ENCODE measurements at regions of chr3 and their contacts with region 1.

Region 1: GRCh38 chr3:13419505-13420044 is 547 bp downstream of the NUP210 start:
- DNase-seq: peak in 1 of 2 experiments; percentile 28
- H3K4me3 ChIP-seq: peak overlapping the region; percentile 90
- H3K27ac ChIP-seq: no peak overlapping the region
- H3K4me1 ChIP-seq: peaks cover 57% of the 10 kb centered on the region
- H3K27me3 ChIP-seq: no peaks in the 10 kb centered on the region
- CTCF ChIP-seq: no peak; the same call in 1 of the 2 replicates

Region 2: DNA sequence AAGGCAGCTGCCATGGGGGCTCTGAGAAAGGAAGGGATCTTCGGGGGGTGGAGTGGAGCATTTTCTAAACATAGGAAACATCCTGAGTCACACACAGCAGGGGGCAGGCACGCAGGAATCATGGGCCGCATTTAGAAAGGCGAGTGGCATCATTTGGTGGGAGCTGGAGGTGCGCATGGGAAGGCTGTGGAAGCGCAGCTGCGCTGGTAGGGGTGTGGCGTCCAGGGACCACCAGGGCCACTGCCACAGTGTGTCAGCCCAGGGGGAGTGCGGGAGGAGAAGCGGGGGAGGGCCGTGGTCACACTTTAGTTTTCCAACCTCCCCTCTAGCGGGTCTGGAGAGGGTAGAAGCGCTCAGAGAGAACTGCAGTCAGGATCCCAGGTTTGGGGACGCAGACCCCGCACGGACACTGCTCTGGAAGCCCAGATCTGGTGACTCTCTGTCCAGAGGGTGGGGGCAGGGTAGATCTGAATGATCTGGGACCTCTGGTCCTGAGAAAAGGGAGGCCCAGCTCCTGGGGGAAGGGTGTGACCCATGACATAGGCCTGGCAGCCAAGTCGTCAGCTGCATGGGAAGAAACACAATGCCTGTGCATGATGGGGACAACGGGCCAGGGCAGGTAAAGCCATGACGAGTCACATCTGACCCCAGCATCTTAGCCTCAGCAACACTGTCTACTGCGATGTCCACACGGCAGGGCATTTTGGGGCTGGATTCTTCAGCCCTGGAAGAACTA is 258.4 kb before region 1 on chr3:
- CTCF ChIA-PET with region 1: no interaction called
- POLR2A ChIA-PET with region 1: no interaction called
- intact Hi-C with region 1: no loop called
- DNase-seq: peak; percentile 16 to 37
- H3K4me3 ChIP-seq: no peak overlapping the region
- H3K27ac ChIP-seq: no peak overlapping the region
- H3K4me1 ChIP-seq: peaks cover 30% of the 10 kb centered on the region
- H3K27me3 ChIP-seq: no peaks in the 10 kb centered on the region
- CTCF ChIP-seq: no peak

Region 3: GRCh38 chr3:13215940-13216546 is 203.5 kb before region 1 on chr3:
- CTCF ChIA-PET with region 1: no interaction called
- POLR2A ChIA-PET with region 1: no interaction called
- intact Hi-C with region 1: no loop called
- DNase-seq: peak; percentile 80 to 95
- H3K4me3 ChIP-seq: no peak overlapping the region
- H3K27ac ChIP-seq: peak overlapping the region; percentile 55
- H3K4me1 ChIP-seq: peaks cover 55% of the 10 kb centered on the region
- H3K27me3 ChIP-seq: no peaks in the 10 kb centered on the region
- CTCF ChIP-seq: no peak

Region 4: DNA sequence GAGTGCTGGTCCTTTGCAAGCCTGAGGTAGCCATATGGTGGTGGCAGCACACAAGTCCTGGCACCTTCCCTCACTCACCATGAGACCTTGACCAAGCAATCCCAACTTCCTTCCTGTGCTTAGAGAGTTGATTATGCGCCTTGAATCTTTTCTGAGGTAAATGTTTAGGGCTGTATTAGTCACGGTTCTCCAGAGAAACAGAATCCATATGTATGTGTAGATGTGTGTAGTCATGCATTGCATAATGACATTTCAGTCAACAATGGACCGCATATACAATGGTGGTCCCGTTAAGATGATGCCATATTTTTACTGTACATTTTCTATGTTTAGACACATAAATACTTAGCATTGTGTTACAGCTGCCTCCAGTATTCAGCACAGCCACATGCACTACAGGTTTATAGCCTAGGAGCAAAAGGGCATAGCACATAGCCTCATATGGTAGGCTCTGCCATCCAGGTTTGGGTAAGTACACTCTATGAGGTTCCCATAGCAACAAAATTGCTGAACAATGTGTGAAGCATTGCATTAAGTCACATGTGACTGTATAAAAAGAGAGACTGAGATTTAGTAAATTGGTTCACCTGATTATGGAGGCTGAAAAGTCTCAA is 20.7 kb after region 1 on chr3:
- CTCF ChIA-PET with region 1: no interaction called
- POLR2A ChIA-PET with region 1: interaction called, 10 read pairs
- intact Hi-C with region 1: no loop called
- DNase-seq: no peak
- H3K4me3 ChIP-seq: no peak overlapping the region
- H3K27ac ChIP-seq: no peak overlapping the region
- H3K4me1 ChIP-seq: no peaks in the 10 kb centered on the region
- H3K27me3 ChIP-seq: no peaks in the 10 kb centered on the region
- CTCF ChIP-seq: no peak

Measured in PC-9 (cell line).